Activated CD8-positive, alpha-beta T cell treated with anti-CD3 and anti-CD28 coated beads, Interleukin-2, amount 10 ng/mL, durations not matched to agents 7 days and 5 days (primary cell): ENCODE measurements at regions of chr7 and their contacts with region 1.

Region 1: GRCh38 chr7:74206589-74207120 is 3.2 kb upstream of the LAT2 start:
- DNase-seq: peak; percentile 88
- ATAC-seq: peak; percentile 68
- H3K4me3 Mint-ChIP-seq: peak overlapping the region; percentile 31
- H3K27ac Mint-ChIP-seq: no peak overlapping the region
- H3K4me1 Mint-ChIP-seq: peaks cover 41% of the 10 kb centered on the region
- H3K27me3 Mint-ChIP-seq: no peaks in the 10 kb centered on the region

Region 2: DNA sequence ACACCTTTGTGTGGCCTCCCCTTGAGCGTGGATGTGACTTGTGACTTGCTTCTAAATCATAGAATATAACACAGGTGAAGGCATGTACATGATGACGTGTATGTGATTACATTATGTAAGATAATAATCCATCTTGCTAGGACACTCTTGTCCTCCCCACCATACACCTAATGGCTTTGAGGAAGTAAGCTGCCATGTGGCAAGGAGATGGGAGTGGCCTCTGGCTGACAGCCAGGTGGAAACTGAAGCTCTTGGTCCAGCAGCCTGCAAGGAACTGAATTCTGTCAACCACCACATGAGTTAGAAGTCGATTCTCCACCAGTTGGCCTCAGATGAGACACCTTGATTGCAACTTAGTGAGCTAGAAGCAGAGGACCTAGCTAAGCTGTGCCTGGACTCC is 246.1 kb before region 1 on chr7:
- CTCF ChIA-PET with region 1: no interaction called
- POLR2A ChIA-PET with region 1: no interaction called
- DNase-seq: no peak
- ATAC-seq: no peak
- H3K4me3 Mint-ChIP-seq: no peak overlapping the region
- H3K27ac Mint-ChIP-seq: no peak overlapping the region
- H3K4me1 Mint-ChIP-seq: no peaks in the 10 kb centered on the region
- H3K27me3 Mint-ChIP-seq: peaks cover 13% of the 10 kb centered on the region

Region 3: DNA sequence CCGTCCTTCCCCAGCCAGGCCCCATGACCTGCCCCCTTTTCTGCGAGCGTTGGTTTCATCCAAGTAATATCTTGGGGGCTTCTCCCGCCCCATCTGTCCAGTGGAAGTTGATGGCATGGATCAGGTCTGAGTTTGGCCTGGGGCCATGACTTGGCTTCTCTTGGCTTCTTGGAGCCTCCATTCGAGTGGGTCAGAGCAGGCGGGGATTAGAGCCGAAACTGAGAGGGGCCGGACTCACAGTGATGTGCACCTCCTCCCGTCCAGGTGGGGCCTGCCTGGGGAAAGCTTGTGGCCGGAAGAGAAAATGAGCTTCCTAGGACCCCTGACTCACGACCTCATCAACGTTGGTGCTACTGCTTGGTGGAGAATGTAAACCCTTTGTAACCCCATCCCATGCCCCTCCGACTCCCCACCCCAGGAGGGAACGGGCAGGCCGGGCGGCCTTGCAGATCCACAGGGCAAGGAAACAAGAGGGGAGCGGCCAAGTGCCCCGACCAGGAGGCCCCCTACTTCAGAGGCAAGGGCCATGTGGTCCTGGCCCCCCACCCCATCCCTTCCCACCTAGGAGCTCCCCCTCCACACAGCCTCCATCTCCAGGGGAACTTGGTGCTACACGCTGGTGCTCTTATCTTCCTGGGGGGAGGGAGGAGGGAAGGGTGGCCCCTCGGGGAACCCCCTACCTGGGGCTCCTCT is 138.1 kb before region 1 on chr7:
- CTCF ChIA-PET with region 1: interaction called, 10 read pairs
- POLR2A ChIA-PET with region 1: no interaction called
- DNase-seq: no peak
- ATAC-seq: no peak
- H3K4me3 Mint-ChIP-seq: no peak overlapping the region
- H3K27ac Mint-ChIP-seq: no peak overlapping the region
- H3K4me1 Mint-ChIP-seq: peaks cover 7% of the 10 kb centered on the region
- H3K27me3 Mint-ChIP-seq: no peaks in the 10 kb centered on the region

Region 4: GRCh38 chr7:74183613-74184450 is 22.8 kb before region 1 on chr7:
- CTCF ChIA-PET with region 1: interaction called, 51 read pairs
- POLR2A ChIA-PET with region 1: no interaction called
- DNase-seq: peak; percentile 42
- ATAC-seq: peak; percentile 68
- H3K4me3 Mint-ChIP-seq: no peak overlapping the region
- H3K27ac Mint-ChIP-seq: peak overlapping the region; percentile 40
- H3K4me1 Mint-ChIP-seq: peaks cover 66% of the 10 kb centered on the region
- H3K27me3 Mint-ChIP-seq: no peaks in the 10 kb centered on the region

Region 5: DNA sequence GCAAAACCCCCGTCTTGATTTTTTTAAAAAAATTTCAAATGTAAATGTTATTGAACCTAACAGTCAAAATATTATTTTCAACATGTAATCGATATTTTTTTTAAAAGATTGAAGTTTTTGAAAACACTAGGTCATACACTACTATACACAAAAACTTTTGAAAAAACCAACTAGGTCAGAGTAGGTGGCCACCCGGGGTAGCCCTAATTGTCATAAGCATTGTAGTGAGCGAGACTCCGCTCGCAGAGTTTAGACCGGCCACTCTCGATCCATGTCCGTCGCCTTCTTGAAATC is 47.1 kb after region 1 on chr7:
- CTCF ChIA-PET with region 1: interaction called, 11 read pairs
- POLR2A ChIA-PET with region 1: no interaction called
- DNase-seq: no peak
- ATAC-seq: peak; percentile 27
- H3K4me3 Mint-ChIP-seq: peak overlapping the region; percentile 96
- H3K27ac Mint-ChIP-seq: peak overlapping the region; percentile 95
- H3K4me1 Mint-ChIP-seq: peaks cover 55% of the 10 kb centered on the region
- H3K27me3 Mint-ChIP-seq: no peaks in the 10 kb centered on the region

Region 6: DNA sequence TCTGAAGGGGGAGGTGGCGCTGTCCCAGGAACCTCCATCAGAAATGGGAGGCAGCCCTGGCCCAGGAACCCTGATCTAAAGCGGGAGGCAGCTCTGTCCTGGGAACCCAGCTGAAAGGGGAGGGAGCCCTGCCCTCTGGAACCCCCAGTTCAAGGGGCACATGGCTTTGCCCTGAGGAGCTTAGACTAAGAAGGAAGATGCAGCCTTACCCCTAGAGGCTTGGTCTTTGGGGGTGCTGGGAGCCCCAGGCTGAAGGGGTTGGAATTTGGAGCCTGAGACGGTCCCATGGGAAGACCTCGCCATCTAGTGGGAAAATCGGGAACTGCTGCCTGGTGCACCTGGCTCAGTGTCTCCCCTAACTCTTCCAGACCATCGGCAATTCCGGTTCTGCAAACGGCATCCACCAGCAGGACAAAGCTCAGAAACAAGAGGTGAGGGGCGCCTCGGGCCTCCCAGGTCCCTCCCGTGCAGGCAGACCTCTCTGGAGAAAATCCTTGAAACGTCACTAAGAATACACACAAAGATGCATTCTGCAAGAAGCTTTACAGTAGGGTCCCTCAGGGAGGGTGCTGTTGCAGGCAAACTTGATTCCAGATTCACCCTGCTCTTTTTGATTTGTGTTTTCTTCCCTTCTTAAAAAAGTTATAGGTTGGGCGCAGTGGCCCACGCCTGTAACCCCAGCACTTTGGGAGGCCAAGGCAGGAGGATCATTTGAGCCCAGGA is 194.6 kb after region 1 on chr7:
- CTCF ChIA-PET with region 1: interaction called, 125 read pairs
- POLR2A ChIA-PET with region 1: interaction called, 4 read pairs
- DNase-seq: peak; percentile 78
- ATAC-seq: peak; percentile 59
- H3K4me3 Mint-ChIP-seq: no peak overlapping the region
- H3K27ac Mint-ChIP-seq: no peak overlapping the region
- H3K4me1 Mint-ChIP-seq: no peaks in the 10 kb centered on the region
- H3K27me3 Mint-ChIP-seq: no peaks in the 10 kb centered on the region